PC-3 (cell line): ENCODE measurements at regions of chr2 and their contacts with region 1.

Region 1: GRCh38 chr2:7118606-7119503 is 201.6 kb downstream of the RNF144A start:
- DNase-seq: peak; percentile 61
- ATAC-seq: peak; percentile 89
- H3K4me3 ChIP-seq: no peak overlapping the region
- H3K27ac ChIP-seq: no peak overlapping the region
- H3K4me1 ChIP-seq: no peaks in the 10 kb centered on the region
- H3K27me3 ChIP-seq: no peaks in the 10 kb centered on the region
- CTCF ChIP-seq: peak; percentile 89

Region 2: GRCh38 chr2:6264198-6264597 is 854.7 kb before region 1 on chr2:
- CTCF ChIA-PET with region 1: no interaction called
- POLR2A ChIA-PET with region 1: no interaction called
- intact Hi-C with region 1: no loop called
- DNase-seq: no peak
- ATAC-seq: no peak
- H3K4me3 ChIP-seq: no peak overlapping the region
- H3K27ac ChIP-seq: no peak overlapping the region
- H3K4me1 ChIP-seq: no peaks in the 10 kb centered on the region
- H3K27me3 ChIP-seq: peaks cover 5% of the 10 kb centered on the region; the same call in 1 of the 2 replicates
- CTCF ChIP-seq: no peak

Region 3: GRCh38 chr2:7133521-7133920 is 14.7 kb after region 1 on chr2:
- CTCF ChIA-PET with region 1: no interaction called
- POLR2A ChIA-PET with region 1: no interaction called
- intact Hi-C with region 1: no loop called
- DNase-seq: peak; percentile 21
- ATAC-seq: peak; percentile 74; the same call in 1 of the 2 replicates
- H3K4me3 ChIP-seq: no peak overlapping the region
- H3K27ac ChIP-seq: no peak overlapping the region
- H3K4me1 ChIP-seq: no peaks in the 10 kb centered on the region
- H3K27me3 ChIP-seq: no peaks in the 10 kb centered on the region
- CTCF ChIP-seq: peak; percentile 42; the same call in 1 of the 2 replicates

Region 4: GRCh38 chr2:7203055-7203467 is 84.2 kb after region 1 on chr2:
- CTCF ChIA-PET with region 1: no interaction called
- POLR2A ChIA-PET with region 1: no interaction called
- intact Hi-C with region 1: loop called (anchors 2 kb)
- DNase-seq: peak; percentile 74
- ATAC-seq: peak; percentile 76
- H3K4me3 ChIP-seq: no peak overlapping the region
- H3K27ac ChIP-seq: no peak overlapping the region
- H3K4me1 ChIP-seq: no peaks in the 10 kb centered on the region
- H3K27me3 ChIP-seq: no peaks in the 10 kb centered on the region
- CTCF ChIP-seq: peak; percentile 97

Region 5: GRCh38 chr2:7417845-7418742 is 299.2 kb after region 1 on chr2:
- CTCF ChIA-PET with region 1: no interaction called
- POLR2A ChIA-PET with region 1: no interaction called
- intact Hi-C with region 1: loop called (anchors 2 kb)
- DNase-seq: peak; percentile 37
- ATAC-seq: peak; percentile 77
- H3K4me3 ChIP-seq: no peak overlapping the region
- H3K27ac ChIP-seq: no peak overlapping the region
- H3K4me1 ChIP-seq: peaks cover 23% of the 10 kb centered on the region
- H3K27me3 ChIP-seq: no peaks in the 10 kb centered on the region
- CTCF ChIP-seq: no peak

Region 6: DNA sequence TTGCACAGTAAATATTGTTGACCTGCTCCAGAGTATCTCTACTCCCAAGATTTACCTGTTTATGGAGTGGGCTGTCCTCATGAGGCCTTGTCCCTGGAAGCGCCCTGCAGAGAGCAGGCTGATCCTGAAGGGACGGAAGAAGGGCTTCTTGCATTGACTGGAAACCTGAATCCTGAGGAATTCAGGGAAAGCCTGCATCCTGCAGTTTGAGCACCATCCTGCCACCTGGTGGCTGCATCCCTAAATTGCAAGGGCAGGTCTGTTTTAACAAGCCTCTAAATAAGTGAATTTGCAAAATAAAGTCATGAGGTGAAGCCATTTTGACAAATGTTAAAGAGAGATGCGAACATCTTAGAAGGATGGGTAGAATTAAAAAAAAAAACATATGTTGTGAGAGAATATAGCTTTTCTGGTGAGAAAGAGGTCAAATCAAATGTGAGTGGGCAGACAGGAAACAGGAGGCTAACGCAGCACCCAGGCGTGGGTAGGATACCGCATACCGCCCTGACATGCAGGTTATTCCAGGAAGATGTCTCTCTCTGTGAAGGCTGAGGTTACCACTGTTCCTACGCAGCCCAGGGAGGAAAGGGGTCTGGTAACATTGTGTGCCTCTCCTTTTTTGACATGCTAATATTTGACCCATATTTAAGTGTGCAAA is 553.3 kb after region 1 on chr2:
- CTCF ChIA-PET with region 1: no interaction called
- POLR2A ChIA-PET with region 1: no interaction called
- intact Hi-C with region 1: loop called (anchors 1 kb)
- DNase-seq: peak; percentile 88
- ATAC-seq: peak; percentile 74
- H3K4me3 ChIP-seq: no peak overlapping the region
- H3K27ac ChIP-seq: no peak overlapping the region
- H3K4me1 ChIP-seq: 0 out of 2 replicates have a peak, but pooled peaks cover 6% of the 10 kb centered on the region
- H3K27me3 ChIP-seq: no peaks in the 10 kb centered on the region
- CTCF ChIP-seq: peak; percentile 92

Region 7: GRCh38 chr2:8761529-8762164 is 1642.8 kb after region 1 on chr2:
- CTCF ChIA-PET with region 1: no interaction called
- POLR2A ChIA-PET with region 1: no interaction called
- intact Hi-C with region 1: loop called (anchors 1 kb)
- DNase-seq: peak; percentile 77
- ATAC-seq: peak; percentile 50; the same call in 1 of the 2 replicates
- H3K4me3 ChIP-seq: no peak overlapping the region
- H3K27ac ChIP-seq: no peak overlapping the region
- H3K4me1 ChIP-seq: no peaks in the 10 kb centered on the region
- H3K27me3 ChIP-seq: no peaks in the 10 kb centered on the region
- CTCF ChIP-seq: peak; percentile 78